GM23248 (cell line): ENCODE measurements at regions of chr17 and their contacts with region 1.

Region 1: GRCh38 chr17:51000835-51001638 is 119.6 kb downstream of the SPAG9 start:
- DNase-seq: peak; percentile 81
- H3K4me3 ChIP-seq: no peak overlapping the region
- H3K27ac ChIP-seq: no peak overlapping the region
- H3K4me1 ChIP-seq: peaks cover under 1% of the 10 kb centered on the region; the same call in 1 of the 2 replicates
- H3K27me3 ChIP-seq: no peaks in the 10 kb centered on the region

Region 2: GRCh38 chr17:51147650-51148049 is 146.6 kb after region 1 on chr17:
- in situ Hi-C with region 1: loop called (anchors 5 kb)
- DNase-seq: peak; percentile 47
- H3K4me3 ChIP-seq: no peak overlapping the region
- H3K27ac ChIP-seq: peak overlapping the region; percentile 37
- H3K4me1 ChIP-seq: peaks cover 20% of the 10 kb centered on the region
- H3K27me3 ChIP-seq: no peaks in the 10 kb centered on the region